ENCODE measurements at regions of chr6 and their contacts with region 1.

Region 1: DNA sequence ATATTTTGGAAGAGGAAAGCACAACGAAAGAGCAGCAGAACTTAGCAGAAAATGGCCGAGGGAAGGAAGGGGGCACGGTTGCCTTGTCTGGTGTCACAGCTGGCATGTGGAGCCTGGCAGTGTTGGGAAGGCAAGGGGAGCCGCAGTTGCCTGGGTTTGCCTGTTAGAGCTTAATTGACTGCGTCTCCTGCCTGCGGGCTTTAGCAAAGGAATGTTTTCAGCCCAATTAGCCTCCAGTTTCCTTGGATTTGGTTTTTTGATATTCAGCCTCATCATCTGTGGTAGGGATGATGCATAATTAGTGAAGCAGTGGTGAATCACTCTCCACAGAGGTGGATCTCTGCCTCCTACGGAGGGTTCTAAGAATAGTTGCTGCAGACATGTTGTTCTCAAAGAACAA is 832.6 kb downstream of the QKI start:
- DNase-seq: no peak
- H3K4me3 ChIP-seq: no peak overlapping the region
- H3K27ac ChIP-seq: no peak overlapping the region
- H3K4me1 ChIP-seq: no peaks in the 10 kb centered on the region
- H3K27me3 ChIP-seq: no peaks in the 10 kb centered on the region
- CTCF ChIP-seq: no peak
- EP300 ChIP-seq: no peak
- POLR2A ChIP-seq: no peak

Region 2: GRCh38 chr6:163756079-163756478 is 491.0 kb before region 1 on chr6:
- in situ Hi-C with region 1: no loop called
- intact Hi-C with region 1: no loop called
- DNase-seq: peak; percentile 44
- H3K4me3 ChIP-seq: no peak overlapping the region
- H3K27ac ChIP-seq: no peak overlapping the region
- H3K4me1 ChIP-seq: no peaks in the 10 kb centered on the region
- H3K27me3 ChIP-seq: no peaks in the 10 kb centered on the region
- CTCF ChIP-seq: no peak
- EP300 ChIP-seq: no peak
- POLR2A ChIP-seq: no peak

Region 3: GRCh38 chr6:164114651-164115050 is 132.5 kb before region 1 on chr6:
- in situ Hi-C with region 1: no loop called
- intact Hi-C with region 1: no loop called
- DNase-seq: no peak
- H3K4me3 ChIP-seq: no peak overlapping the region
- H3K27ac ChIP-seq: no peak overlapping the region
- H3K4me1 ChIP-seq: peaks cover 0 to under 1% (median 0%) of the 10 kb centered on the region in 4 donors
- H3K27me3 ChIP-seq: no peaks in the 10 kb centered on the region
- CTCF ChIP-seq: no peak
- EP300 ChIP-seq: no peak
- POLR2A ChIP-seq: no peak

Region 4: GRCh38 chr6:164273491-164273890 is 26.4 kb after region 1 on chr6:
- in situ Hi-C with region 1: no loop called
- intact Hi-C with region 1: loop called (anchors 1 kb)
- DNase-seq: no peak
- H3K4me3 ChIP-seq: no peak overlapping the region
- H3K27ac ChIP-seq: no peak overlapping the region
- H3K4me1 ChIP-seq: no peaks in the 10 kb centered on the region
- H3K27me3 ChIP-seq: no peaks in the 10 kb centered on the region
- CTCF ChIP-seq: no peak
- EP300 ChIP-seq: no peak
- POLR2A ChIP-seq: no peak